Naive thymus-derived CD4-positive, alpha-beta T cell (primary cell): ENCODE measurements at regions of chr17 and their contacts with region 1.

Region 1: DNA sequence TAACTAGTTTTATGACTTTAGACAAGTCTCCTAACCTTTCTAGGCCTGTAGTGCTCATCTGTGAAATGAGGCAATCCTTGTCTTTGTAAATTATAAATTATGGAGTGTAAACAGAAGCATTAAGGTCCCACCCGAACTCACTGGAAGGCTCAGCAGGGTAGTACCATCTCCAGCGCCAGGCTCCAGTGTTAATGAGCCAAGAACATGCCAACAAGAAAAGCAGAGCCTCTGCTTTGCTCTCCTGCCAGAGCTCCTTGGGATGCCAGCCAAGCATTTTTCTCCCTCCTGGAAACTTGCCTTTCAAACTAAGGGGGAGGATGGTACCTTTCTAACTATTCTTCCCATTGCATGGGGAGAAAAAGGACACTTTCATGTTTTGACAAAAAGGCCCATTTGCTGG is 14.9 kb downstream of the LIMD2 start:
- DNase-seq: no peak
- ATAC-seq: no peak
- H3K4me3 ChIP-seq: no peak overlapping the region
- H3K4me3 Mint-ChIP-seq: no peak overlapping the region
- H3K27ac ChIP-seq: no peak overlapping the region
- H3K27ac Mint-ChIP-seq: peak overlapping the region in 2 of 9 donors; percentile 3 to 19
- H3K4me1 ChIP-seq: no peaks in the 10 kb centered on the region
- H3K4me1 Mint-ChIP-seq: peaks cover 0 to 9% (median 3%) of the 10 kb centered on the region in 7 donors
- H3K27me3 ChIP-seq: no peaks in the 10 kb centered on the region
- H3K27me3 Mint-ChIP-seq: no peaks in the 10 kb centered on the region

Region 2: DNA sequence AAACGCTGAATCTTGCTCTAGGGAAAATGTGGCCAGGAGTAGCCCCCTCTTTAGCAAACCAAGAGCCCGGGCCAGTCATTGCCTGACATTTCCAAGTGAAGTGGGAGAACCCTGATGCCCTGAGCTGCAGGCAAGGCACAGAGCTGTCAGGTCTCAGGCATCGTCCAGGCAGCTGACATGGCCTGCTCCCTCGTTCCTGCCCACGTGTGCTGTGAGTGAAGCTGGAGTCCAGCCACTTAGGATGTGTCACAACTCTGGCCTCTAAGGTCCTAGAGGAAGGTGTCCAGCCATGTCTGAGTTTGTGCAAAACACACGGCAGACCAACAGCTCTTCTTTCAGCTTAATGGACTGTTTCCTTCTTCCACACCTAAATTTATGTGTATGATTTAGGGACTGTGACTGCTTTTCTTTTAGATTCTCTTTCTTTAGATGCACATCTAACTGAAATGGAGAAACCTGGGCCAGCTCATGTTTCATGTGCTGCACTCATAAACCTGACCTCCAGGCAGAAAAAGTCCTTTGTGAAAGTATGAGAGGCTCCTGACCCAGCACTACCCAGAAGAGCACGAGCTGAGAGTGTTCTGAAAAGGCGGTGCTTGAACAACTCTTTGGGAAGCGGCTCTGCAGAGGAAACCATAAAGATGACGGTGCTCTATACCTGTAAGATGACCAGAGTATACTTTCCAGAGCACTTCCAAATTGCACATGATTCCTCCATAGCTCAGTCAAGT is 29.7 kb after region 1 on chr17:
- CTCF ChIA-PET with region 1: interaction called, 10 read pairs
- POLR2A ChIA-PET with region 1: interaction called, 3 read pairs
- intact Hi-C with region 1: no loop called
- DNase-seq: no peak
- ATAC-seq: no peak
- H3K4me3 ChIP-seq: no peak overlapping the region
- H3K4me3 Mint-ChIP-seq: no peak overlapping the region
- H3K27ac ChIP-seq: no peak overlapping the region
- H3K27ac Mint-ChIP-seq: peak overlapping the region in 3 of 9 donors; percentile 41 to 76 (median 62)
- H3K4me1 ChIP-seq: peaks cover 4 to 11% of the 10 kb centered on the region in 2 donors
- H3K4me1 Mint-ChIP-seq: peaks cover 7 to 21% (median 15%) of the 10 kb centered on the region in 7 donors
- H3K27me3 ChIP-seq: no peaks in the 10 kb centered on the region
- H3K27me3 Mint-ChIP-seq: no peaks in the 10 kb centered on the region